ENCODE measurements at regions of chr17 and their contacts with region 1.

Region 1: DNA sequence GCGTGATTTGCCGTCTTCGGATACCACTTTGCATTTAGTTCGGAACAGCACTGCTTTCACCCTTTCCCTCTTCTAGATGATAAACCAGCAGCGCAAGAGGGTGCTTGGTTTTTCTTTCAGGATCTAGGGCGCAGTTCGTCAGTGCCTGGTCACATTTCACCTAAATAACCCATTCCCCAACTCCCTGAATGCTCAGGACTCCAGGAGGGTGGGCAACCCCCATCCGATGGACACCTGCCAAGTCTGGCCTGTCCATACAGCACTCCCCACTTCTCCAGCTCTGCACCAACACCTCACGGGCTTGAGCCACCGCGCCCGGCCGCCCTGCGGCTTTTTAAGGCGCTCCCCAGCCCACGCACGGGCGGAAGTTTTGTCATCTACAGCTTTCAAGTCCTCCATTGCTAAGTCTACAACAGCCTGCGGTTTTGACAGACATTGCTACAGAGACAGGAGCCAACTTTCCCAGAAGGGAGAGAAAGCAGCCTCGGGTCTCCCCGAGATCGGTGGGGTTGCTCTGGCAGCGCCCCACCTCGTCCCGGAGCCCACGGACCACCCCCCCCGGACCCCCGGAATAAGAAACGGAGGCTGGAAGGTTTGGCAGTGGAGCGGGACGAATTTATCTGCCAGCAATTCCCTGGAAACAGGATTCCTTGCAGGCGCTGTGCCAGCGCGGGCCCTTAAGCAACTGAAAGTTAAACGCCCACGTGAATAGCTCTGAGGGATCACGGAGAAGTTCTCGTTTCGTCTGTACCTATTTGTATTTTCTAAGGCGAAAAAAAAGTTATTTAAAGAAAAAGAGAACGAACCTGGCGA is 38.6 kb upstream of the SLFN13 start:
- DNase-seq: peak; percentile 35 to 89 (median 69)
- ATAC-seq: peak; percentile 72
- H3K4me3 ChIP-seq: peak overlapping the region; percentile 89
- H3K4me3 Mint-ChIP-seq: peak overlapping the region; percentile 95
- H3K27ac ChIP-seq: peak overlapping the region; percentile 76 to 82
- H3K27ac Mint-ChIP-seq: peak overlapping the region; percentile 96
- H3K4me1 ChIP-seq: peaks cover 38% of the 10 kb centered on the region
- H3K4me1 Mint-ChIP-seq: peaks cover 60% of the 10 kb centered on the region
- H3K27me3 ChIP-seq: no peaks in the 10 kb centered on the region
- H3K27me3 Mint-ChIP-seq: no peaks in the 10 kb centered on the region
- CTCF ChIP-seq: no peak

Region 2: DNA sequence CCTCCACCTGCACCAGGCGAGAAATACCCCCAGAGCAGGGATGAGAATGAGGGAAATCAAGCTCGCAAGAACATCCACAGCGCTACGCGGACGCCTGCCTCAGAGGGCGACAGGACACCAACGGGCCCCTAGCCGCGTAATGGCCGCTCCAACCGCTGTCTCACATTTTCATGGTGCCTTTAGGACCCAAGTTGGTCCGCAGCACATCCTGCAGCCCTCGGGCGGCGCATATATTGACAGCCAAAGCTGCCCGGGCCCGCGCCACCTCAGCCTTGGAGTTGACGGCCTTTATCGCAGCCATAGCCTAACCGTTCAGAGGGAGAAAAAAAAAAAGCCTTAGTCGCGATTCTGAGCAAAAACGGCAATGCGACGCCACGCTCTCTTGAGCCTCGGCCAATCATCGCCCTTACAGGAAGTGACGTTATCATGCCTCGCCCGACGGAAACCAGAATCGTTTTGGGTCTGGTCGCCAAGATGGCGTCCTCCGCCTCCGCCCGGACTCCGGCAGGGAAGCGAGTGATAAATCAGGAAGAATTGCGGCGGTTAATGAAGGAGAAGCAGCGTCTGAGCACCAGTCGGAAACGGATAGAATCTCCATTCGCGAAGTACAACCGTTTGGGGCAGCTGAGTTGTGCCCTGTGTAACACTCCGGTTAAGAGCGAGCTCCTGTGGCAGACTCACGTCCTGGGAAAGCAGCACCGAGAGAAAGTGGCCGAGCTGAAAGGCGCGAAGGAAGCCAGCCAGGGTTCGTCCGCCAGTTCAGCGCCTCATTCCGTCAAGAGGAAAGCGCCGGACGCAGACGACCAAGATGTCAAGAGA is 525.8 kb before region 1 on chr17 and contains the starts of genes CCT6B and ZNF830:
- CTCF ChIA-PET with region 1: no interaction called
- POLR2A ChIA-PET with region 1: no interaction called
- intact Hi-C with region 1: no loop called
- DNase-seq: peak; percentile 81 to 97 (median 85)
- ATAC-seq: peak; percentile 89
- H3K4me3 ChIP-seq: peak within 1 kb of the TSS; percentile 87
- H3K4me3 Mint-ChIP-seq: peak within 1 kb of the TSS; percentile 100
- H3K27ac ChIP-seq: peak within 1 kb of the TSS; percentile 96
- H3K27ac Mint-ChIP-seq: peak within 1 kb of the TSS; percentile 95
- H3K4me1 ChIP-seq: peaks cover 18% of the 10 kb centered on the region
- H3K4me1 Mint-ChIP-seq: peaks cover 30% of the 10 kb centered on the region
- H3K27me3 ChIP-seq: no peaks in the 10 kb centered on the region
- H3K27me3 Mint-ChIP-seq: peaks cover 8% of the 10 kb centered on the region
- CTCF ChIP-seq: no peak
- total RNA-seq, gene CCT6B: 4.6 to 4.9 TPM
- total RNA-seq, gene ZNF830: 34.4 to 39.0 TPM

Region 3: GRCh38 chr17:35161281-35161761 is 325.8 kb before region 1 on chr17:
- CTCF ChIA-PET with region 1: no interaction called
- POLR2A ChIA-PET with region 1: interaction called, 11 read pairs
- intact Hi-C with region 1: no loop called
- DNase-seq: peak in 6 of 14 experiments; percentile 15 to 78 (median 56)
- ATAC-seq: peak; percentile 70
- H3K4me3 ChIP-seq: peak overlapping the region; percentile 30
- H3K4me3 Mint-ChIP-seq: peak overlapping the region; percentile 67
- H3K27ac ChIP-seq: peak overlapping the region; percentile 62 to 68
- H3K27ac Mint-ChIP-seq: peak overlapping the region; percentile 89
- H3K4me1 ChIP-seq: peaks cover 53% of the 10 kb centered on the region
- H3K4me1 Mint-ChIP-seq: peaks cover 66% of the 10 kb centered on the region
- H3K27me3 ChIP-seq: no peaks in the 10 kb centered on the region
- H3K27me3 Mint-ChIP-seq: no peaks in the 10 kb centered on the region
- CTCF ChIP-seq: no peak

Region 4: DNA sequence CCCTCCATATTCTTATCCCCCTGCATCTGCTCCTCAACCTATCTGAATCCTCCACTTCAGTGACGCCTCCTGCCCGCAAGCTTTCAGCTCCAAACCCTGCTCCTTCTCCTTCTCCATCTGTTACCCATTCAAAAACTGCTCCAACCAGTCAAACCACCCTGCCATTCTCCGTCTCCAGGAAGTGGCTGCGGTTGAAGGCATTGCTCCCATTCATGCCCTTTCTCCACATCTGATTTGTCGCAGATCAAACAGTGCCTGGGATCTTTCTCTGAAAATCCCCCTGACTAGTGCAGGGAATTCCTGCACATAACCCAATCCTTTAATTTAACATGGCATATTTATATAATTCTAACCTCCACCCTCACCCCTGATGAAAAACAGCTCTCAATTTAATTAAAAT is 188.0 kb before region 1 on chr17:
- CTCF ChIA-PET with region 1: no interaction called
- POLR2A ChIA-PET with region 1: no interaction called
- intact Hi-C with region 1: no loop called
- DNase-seq: no peak
- ATAC-seq: no peak
- H3K4me3 ChIP-seq: no peak overlapping the region
- H3K4me3 Mint-ChIP-seq: no peak overlapping the region
- H3K27ac ChIP-seq: no peak overlapping the region
- H3K27ac Mint-ChIP-seq: no peak overlapping the region
- H3K4me1 ChIP-seq: no peaks in the 10 kb centered on the region
- H3K4me1 Mint-ChIP-seq: peaks cover 6% of the 10 kb centered on the region
- H3K27me3 ChIP-seq: no peaks in the 10 kb centered on the region
- H3K27me3 Mint-ChIP-seq: no peaks in the 10 kb centered on the region
- CTCF ChIP-seq: no peak

Region 5: GRCh38 chr17:35373534-35373983 is 113.6 kb before region 1 on chr17 and contains the start of gene SLFN11:
- CTCF ChIA-PET with region 1: interaction called, 5 read pairs
- POLR2A ChIA-PET with region 1: interaction called, 40 read pairs
- intact Hi-C with region 1: loop called (anchors 5 to 10 kb)
- DNase-seq: peak; percentile 50 to 94 (median 71)
- ATAC-seq: peak; percentile 88
- H3K4me3 ChIP-seq: peak within 1 kb of the TSS; percentile 84
- H3K4me3 Mint-ChIP-seq: peak within 1 kb of the TSS; percentile 96
- H3K27ac ChIP-seq: peak within 1 kb of the TSS; percentile 80 to 96
- H3K27ac Mint-ChIP-seq: peak within 1 kb of the TSS; percentile 95
- H3K4me1 ChIP-seq: peaks cover 16% of the 10 kb centered on the region
- H3K4me1 Mint-ChIP-seq: peaks cover 62% of the 10 kb centered on the region
- H3K27me3 ChIP-seq: no peaks in the 10 kb centered on the region
- H3K27me3 Mint-ChIP-seq: no peaks in the 10 kb centered on the region
- CTCF ChIP-seq: no peak
- total RNA-seq, gene SLFN11: 16.5 to 18.5 TPM

Region 6: DNA sequence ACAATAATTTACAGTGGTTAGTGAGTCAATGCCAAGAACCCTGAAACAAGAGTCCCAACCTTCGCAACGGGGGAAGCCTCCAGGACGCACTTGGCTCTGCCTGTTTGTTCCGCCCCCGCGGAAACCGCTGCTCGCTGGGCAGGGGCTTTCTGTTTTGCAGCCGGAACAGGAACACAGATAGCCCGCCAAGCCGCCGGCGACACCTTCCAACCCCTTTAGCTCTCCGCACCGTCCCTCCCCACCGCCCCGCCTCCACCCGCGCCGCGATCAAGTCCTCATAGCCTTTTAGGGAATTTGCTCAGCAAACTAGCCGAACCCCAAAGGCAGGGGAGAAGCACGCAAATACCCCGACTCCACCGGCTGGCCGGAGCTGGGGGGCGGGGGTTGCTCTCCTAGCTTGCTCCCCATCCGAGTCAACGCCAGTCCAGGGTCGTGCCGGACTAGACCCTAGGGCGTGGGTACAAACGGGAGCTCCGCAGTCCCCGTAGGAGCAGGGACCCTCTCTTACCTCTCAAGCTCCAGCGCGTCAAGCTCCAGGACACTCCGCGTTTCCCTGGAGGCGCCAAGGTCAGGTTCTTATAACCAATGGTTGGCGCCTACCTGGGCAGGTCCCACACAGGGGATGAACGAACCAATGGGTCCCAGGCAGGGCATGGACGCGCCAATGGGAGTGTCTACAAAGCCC is 38.8 kb before region 1 on chr17 and contains the start of gene SLFN13:
- CTCF ChIA-PET with region 1: no interaction called
- POLR2A ChIA-PET with region 1: interaction called, 49 read pairs
- intact Hi-C with region 1: loop called (anchors 5 kb)
- DNase-seq: peak; percentile 64 to 93 (median 76)
- ATAC-seq: peak; percentile 92
- H3K4me3 ChIP-seq: peak within 1 kb of the TSS; percentile 69
- H3K4me3 Mint-ChIP-seq: peak within 1 kb of the TSS; percentile 94
- H3K27ac ChIP-seq: peak within 1 kb of the TSS; percentile 23 to 63
- H3K27ac Mint-ChIP-seq: peak within 1 kb of the TSS; percentile 81
- H3K4me1 ChIP-seq: peaks cover 18% of the 10 kb centered on the region
- H3K4me1 Mint-ChIP-seq: peaks cover 19% of the 10 kb centered on the region
- H3K27me3 ChIP-seq: no peaks in the 10 kb centered on the region
- H3K27me3 Mint-ChIP-seq: no peaks in the 10 kb centered on the region
- CTCF ChIP-seq: no peak
- total RNA-seq, gene SLFN13: 9.5 to 9.7 TPM

Region 7: DNA sequence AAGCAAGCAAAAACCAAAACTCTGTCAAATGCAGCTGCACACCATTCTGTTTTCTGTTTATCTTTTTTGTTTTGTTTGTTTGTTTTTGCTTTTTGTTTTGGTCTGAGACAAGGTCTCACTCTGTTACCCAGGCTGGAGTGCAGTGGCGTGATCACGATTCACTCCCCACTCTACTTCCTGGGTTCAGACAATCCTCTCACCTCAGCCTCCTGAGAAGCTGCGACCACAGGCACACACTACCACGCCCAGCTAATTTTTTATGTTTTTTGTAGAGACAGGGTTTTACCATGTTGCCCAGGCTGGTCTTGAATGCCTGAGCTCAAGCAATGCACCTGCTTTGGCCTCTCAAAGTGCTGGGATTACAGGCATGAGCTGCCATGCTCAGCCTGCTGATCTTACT is 19.3 kb before region 1 on chr17:
- CTCF ChIA-PET with region 1: no interaction called
- POLR2A ChIA-PET with region 1: interaction called, 24 read pairs
- intact Hi-C with region 1: loop called in 1 of 2 experiments (anchors 2 kb)
- DNase-seq: peak in 7 of 14 experiments; percentile 11 to 75 (median 42)
- ATAC-seq: peak; percentile 78
- H3K4me3 ChIP-seq: no peak overlapping the region
- H3K4me3 Mint-ChIP-seq: peak overlapping the region; percentile 38
- H3K27ac ChIP-seq: peak overlapping the region; percentile 3 to 30
- H3K27ac Mint-ChIP-seq: peak overlapping the region; percentile 73
- H3K4me1 ChIP-seq: peaks cover 17% of the 10 kb centered on the region
- H3K4me1 Mint-ChIP-seq: peaks cover 47% of the 10 kb centered on the region
- H3K27me3 ChIP-seq: no peaks in the 10 kb centered on the region
- H3K27me3 Mint-ChIP-seq: no peaks in the 10 kb centered on the region
- CTCF ChIP-seq: no peak

Region 8: GRCh38 chr17:35521150-35521549 is 34.0 kb after region 1 on chr17:
- CTCF ChIA-PET with region 1: interaction called, 7 read pairs
- POLR2A ChIA-PET with region 1: interaction called, 26 read pairs
- intact Hi-C with region 1: no loop called
- DNase-seq: no peak
- ATAC-seq: no peak
- H3K4me3 ChIP-seq: no peak overlapping the region
- H3K4me3 Mint-ChIP-seq: no peak overlapping the region
- H3K27ac ChIP-seq: no peak overlapping the region
- H3K27ac Mint-ChIP-seq: peak overlapping the region; percentile 77
- H3K4me1 ChIP-seq: peaks cover 56% of the 10 kb centered on the region
- H3K4me1 Mint-ChIP-seq: peaks cover 100% of the 10 kb centered on the region
- H3K27me3 ChIP-seq: no peaks in the 10 kb centered on the region
- H3K27me3 Mint-ChIP-seq: no peaks in the 10 kb centered on the region
- CTCF ChIP-seq: no peak

Region 9: GRCh38 chr17:35578197-35578928 is 91.2 kb after region 1 on chr17 and contains the start of gene PEX12:
- CTCF ChIA-PET with region 1: no interaction called
- POLR2A ChIA-PET with region 1: interaction called, 11 read pairs
- intact Hi-C with region 1: no loop called
- DNase-seq: peak; percentile 77 to 96 (median 86)
- ATAC-seq: peak; percentile 96
- H3K4me3 ChIP-seq: peak within 1 kb of the TSS; percentile 85
- H3K4me3 Mint-ChIP-seq: peak within 1 kb of the TSS; percentile 92
- H3K27ac ChIP-seq: peak within 1 kb of the TSS; percentile 90 to 93
- H3K27ac Mint-ChIP-seq: peak within 1 kb of the TSS; percentile 97
- H3K4me1 ChIP-seq: peaks cover 21% of the 10 kb centered on the region
- H3K4me1 Mint-ChIP-seq: peaks cover 42% of the 10 kb centered on the region
- H3K27me3 ChIP-seq: no peaks in the 10 kb centered on the region
- H3K27me3 Mint-ChIP-seq: no peaks in the 10 kb centered on the region
- CTCF ChIP-seq: no peak
- total RNA-seq, gene PEX12: 3.0 to 3.2 TPM

Measured in CD4-positive, alpha-beta T cell (primary cell).